ENCODE measurements at regions of chr10 and their contacts with region 1.

Region 1: DNA sequence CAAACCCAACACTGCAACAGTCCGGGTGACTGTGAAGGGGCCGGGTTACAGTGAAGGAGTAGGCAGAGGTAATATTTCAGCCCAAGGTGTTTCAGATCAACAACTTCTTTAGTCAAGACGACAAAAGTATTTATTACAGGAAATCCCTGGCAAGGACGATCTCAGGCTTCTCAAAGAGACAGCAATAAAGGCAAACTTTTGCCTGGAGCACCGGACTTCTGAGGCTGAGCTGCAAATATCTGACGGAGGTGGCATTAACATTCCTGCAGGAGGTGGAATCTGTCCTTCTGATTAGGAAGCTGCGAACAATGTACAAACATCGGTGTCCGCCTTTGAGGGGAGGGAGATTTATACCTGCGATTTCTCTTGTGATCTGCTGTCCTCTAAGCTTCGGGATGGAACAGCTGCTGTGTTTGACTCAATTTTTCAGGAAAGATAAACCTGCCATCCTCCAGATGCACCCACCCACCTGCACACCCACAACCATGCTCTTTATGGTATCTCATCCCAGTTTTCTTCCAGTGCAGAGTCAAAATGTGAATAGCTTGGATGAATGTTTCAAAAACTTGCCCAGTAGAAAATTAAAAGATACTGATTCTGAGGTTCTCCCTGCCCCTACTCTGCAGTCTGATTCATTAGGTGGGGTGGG is 32.1 kb downstream of the EMX2 start:
- DNase-seq: peak; percentile 75 to 87
- H3K4me3 ChIP-seq: no peak overlapping the region
- H3K4me3 Mint-ChIP-seq: peak overlapping the region; percentile 42
- H3K27ac Mint-ChIP-seq: peak overlapping the region; percentile 80
- H3K4me1 ChIP-seq: peaks cover 25% of the 10 kb centered on the region
- H3K4me1 Mint-ChIP-seq: peaks cover 37% of the 10 kb centered on the region
- H3K27me3 ChIP-seq: no peaks in the 10 kb centered on the region
- H3K27me3 Mint-ChIP-seq: no peaks in the 10 kb centered on the region
- CTCF ChIP-seq: no peak

Region 2: GRCh38 chr10:117413928-117414618 is 160.5 kb before region 1 on chr10:
- CTCF ChIA-PET with region 1: no interaction called
- POLR2A ChIA-PET with region 1: no interaction called
- intact Hi-C with region 1: no loop called
- DNase-seq: no peak
- H3K4me3 ChIP-seq: no peak overlapping the region
- H3K4me3 Mint-ChIP-seq: no peak overlapping the region
- H3K27ac Mint-ChIP-seq: no peak overlapping the region
- H3K4me1 ChIP-seq: no peaks in the 10 kb centered on the region; the same call in 1 of the 2 replicates
- H3K4me1 Mint-ChIP-seq: no peaks in the 10 kb centered on the region
- H3K27me3 ChIP-seq: no peaks in the 10 kb centered on the region
- H3K27me3 Mint-ChIP-seq: no peaks in the 10 kb centered on the region
- CTCF ChIP-seq: no peak

Region 3: GRCh38 chr10:117609095-117609795 is 34.6 kb after region 1 on chr10:
- CTCF ChIA-PET with region 1: no interaction called
- POLR2A ChIA-PET with region 1: interaction called, 4 read pairs
- intact Hi-C with region 1: loop called (anchors 1 kb)
- DNase-seq: peak; percentile 71 to 75
- H3K4me3 ChIP-seq: no peak overlapping the region
- H3K4me3 Mint-ChIP-seq: peak overlapping the region; percentile 45
- H3K27ac Mint-ChIP-seq: peak overlapping the region; percentile 84
- H3K4me1 ChIP-seq: peaks cover 30% of the 10 kb centered on the region
- H3K4me1 Mint-ChIP-seq: peaks cover 36% of the 10 kb centered on the region
- H3K27me3 ChIP-seq: no peaks in the 10 kb centered on the region
- H3K27me3 Mint-ChIP-seq: no peaks in the 10 kb centered on the region
- CTCF ChIP-seq: no peak

Region 4: DNA sequence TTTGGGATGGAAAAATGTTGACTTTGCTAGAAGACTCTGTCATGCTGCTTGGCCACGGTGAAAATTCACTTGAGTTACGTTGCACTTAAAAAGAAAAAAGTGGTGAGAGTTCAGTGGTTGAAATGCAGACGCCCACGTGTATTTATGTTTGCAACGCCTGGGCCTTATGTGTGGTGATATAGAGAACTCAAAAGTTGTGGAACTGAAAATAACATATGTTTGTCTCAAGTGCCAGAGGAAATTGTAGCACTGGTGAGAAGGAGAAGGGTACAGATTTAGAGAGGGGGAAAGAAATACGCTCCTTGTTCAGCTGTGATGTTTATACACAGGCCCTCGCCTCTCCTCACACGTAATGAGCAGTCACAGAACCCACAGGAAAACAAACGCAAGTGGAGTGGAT is 41.6 kb after region 1 on chr10:
- CTCF ChIA-PET with region 1: no interaction called
- POLR2A ChIA-PET with region 1: no interaction called
- intact Hi-C with region 1: loop called (anchors 2 kb)
- DNase-seq: no peak
- H3K4me3 ChIP-seq: no peak overlapping the region
- H3K4me3 Mint-ChIP-seq: peak overlapping the region; percentile 29
- H3K27ac Mint-ChIP-seq: peak overlapping the region; percentile 68
- H3K4me1 ChIP-seq: peaks cover 25% of the 10 kb centered on the region
- H3K4me1 Mint-ChIP-seq: peaks cover 35% of the 10 kb centered on the region
- H3K27me3 ChIP-seq: no peaks in the 10 kb centered on the region
- H3K27me3 Mint-ChIP-seq: no peaks in the 10 kb centered on the region
- CTCF ChIP-seq: no peak

Measured in Caco-2 (cell line).